Left ventricle myocardium superior (tissue), 1 donor: ENCODE measurements at regions of chr22 and their contacts with region 1.

Region 1: DNA sequence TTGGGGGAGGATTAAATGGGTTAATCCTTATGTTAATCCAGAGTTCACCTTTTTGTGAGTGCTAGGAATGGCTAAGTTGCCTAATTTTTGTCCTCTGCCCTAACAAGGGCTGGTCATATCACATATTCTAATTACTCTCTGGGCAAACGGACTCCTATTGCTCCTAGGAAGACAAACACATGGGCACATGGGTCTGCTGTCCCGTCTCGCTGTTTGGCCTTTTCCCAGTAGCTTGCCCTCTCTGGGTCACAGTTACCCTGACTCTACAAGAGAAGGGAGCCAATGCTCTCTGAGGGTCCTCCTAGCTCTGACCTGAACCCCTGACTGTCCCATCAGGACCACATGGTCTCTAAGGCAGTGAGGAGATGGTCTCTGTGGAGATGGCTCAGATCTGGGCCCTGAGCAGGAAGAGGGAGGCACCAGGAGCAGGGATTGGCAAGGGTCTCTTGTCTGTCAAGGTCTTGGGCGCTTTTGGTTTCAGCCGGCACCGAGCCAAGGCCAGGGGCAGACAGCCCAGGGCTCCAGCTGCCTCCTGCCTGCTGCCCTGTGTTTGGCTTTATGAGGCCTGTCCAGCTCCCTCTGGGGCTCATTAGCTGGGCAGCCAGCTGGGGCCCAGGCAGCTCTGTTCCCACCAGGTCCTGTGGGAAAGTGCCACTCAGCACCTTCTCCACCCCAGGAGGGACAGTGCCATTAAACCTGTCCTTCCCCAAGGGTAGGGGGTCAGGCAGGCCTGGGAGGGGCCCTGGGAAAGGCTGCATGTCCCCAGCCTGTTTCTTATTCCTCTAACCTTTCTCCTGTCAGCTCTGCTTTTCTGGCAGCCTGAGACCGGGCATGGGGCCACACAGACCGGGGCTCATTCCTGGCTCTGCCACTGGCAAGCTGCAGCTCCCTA is 559.9 kb downstream of the MN1 start:
- DNase-seq: peak; percentile 66
- ATAC-seq: peak; percentile 38

Region 2: DNA sequence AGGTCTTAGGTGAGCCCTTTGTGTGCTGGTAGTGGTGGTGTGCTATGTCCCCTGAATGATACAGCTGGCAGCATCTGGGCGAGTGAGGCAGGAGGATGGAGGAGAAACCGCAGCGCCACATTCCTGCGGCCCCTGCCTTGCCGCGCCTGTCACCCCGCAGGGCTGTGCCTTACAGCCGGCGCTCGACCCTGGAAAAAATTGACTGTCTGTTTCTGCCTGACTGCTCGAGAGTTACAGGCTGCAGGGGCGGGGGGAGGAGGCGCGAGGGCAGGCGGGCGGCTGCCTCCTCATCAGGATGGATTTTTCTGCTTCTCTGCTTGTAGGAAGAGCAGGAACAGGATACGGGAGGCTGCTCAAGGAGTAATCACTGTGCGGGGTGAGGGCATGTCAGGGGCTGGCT is 140.9 kb before region 1 on chr22:
- intact Hi-C with region 1: no loop called
- DNase-seq: no peak
- ATAC-seq: no peak

Region 3: GRCh38 chr22:29149841-29150555 is 1908.3 kb after region 1 on chr22:
- intact Hi-C with region 1: loop called (anchors 10 kb)
- DNase-seq: peak; percentile 58
- ATAC-seq: peak; percentile 52